Sigmoid colon (tissue), 7 donors: ENCODE measurements at regions of chr6 and their contacts with region 1.

Region 1: DNA sequence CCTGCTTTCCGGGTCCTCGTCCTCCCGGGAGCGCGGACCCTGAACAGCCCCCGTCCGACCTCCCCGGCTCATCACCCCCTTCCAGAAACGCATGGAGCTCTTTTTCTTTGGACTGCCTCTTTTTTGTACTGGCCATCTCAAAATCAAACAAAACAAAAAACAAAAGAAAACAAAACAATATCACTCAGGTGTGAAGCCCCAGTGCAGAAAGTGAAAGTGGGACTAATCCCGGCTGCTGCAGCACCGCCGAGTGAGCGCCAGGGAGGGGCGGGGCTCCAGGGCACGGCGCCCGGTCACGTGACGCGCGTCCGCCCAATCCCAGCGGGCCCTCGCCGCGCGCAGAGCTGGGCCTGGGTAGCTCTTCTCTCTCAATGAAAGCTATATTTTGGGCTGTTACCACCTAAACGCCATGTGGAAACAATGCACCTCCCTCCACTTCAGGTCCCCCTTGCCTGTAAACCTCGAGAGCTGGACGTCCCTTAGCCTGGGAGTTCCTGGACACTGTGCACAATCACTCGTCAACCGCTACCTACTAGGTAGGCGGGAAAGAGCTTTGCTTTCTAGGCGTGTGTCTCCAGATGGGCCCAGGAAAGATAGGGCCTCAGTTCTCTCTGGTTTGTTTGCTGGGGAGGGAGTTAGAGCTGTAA is 93.7 kb upstream of the PRDM1 start:
- DNase-seq: peak; percentile 84
- H3K4me3 ChIP-seq: peak overlapping the region; percentile 29 to 56 (median 46)
- H3K27ac ChIP-seq: peak overlapping the region in 2 of 4 donors; percentile 11 to 32
- H3K4me1 ChIP-seq: peaks cover 0 to 37% (median 32%) of the 10 kb centered on the region in 4 donors
- H3K27me3 ChIP-seq: peaks cover 46 to 100% (median 86%) of the 10 kb centered on the region in 3 donors
- CTCF ChIP-seq: no peak
- EP300 ChIP-seq: no peak
- POLR2A ChIP-seq: no peak

Region 2: DNA sequence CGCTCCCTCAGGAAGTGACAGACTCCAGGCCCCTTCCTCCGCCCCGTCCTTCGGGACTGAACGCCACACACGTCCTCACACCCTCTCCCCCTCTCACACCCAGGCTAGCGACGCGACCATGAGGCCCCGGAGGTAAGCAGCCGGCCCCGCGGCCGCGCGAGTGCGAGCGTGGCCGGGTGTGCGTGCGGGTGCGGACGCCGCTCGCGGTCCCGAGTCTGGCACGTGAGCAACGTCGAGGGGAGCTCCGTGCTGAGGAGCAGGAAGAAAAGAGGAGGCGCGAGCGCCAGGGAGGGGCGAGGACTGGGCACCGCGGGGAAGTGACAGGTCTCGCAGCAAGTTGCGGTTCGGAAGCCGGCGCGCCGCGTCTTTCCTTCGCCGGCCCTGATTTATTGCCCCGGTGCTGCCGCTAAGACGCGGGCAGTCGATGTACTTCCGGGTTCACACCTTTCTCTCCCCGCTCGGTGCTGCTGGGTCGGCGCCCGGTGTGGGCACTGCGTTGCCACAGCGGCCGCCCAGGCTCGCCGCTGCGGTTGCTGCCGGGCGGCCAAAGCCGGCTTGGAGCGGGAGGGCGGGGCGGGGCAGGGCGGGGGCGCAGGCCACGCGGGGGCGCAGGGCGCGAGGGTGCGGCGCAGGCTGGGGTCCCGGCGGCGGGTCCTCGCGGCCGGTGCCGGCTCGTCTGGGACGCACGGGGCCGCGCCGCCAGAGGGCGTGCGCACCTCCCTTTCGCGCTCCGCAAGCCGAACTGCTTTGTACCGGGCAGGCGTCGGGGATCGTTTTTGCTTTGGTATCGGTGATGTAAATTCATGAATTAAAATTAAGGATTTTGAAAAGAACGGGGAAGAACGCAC is 1051.3 kb before region 1 on chr6:
- intact Hi-C with region 1: loop called (anchors 5 kb)
- DNase-seq: no peak
- H3K4me3 ChIP-seq: peak overlapping the region; percentile 5 to 46 (median 24)
- H3K27ac ChIP-seq: no peak overlapping the region
- H3K4me1 ChIP-seq: peaks cover 0 to 11% (median 10%) of the 10 kb centered on the region in 4 donors
- H3K27me3 ChIP-seq: peaks cover 23 to 94% (median 62%) of the 10 kb centered on the region in 3 donors
- CTCF ChIP-seq: peak in 1 of 4 experiments; percentile 31
- EP300 ChIP-seq: no peak
- POLR2A ChIP-seq: no peak

Region 3: GRCh38 chr6:105601541-105602236 is 390.7 kb before region 1 on chr6:
- intact Hi-C with region 1: loop called (anchors 10 kb)
- DNase-seq: peak; percentile 89
- H3K4me3 ChIP-seq: no peak overlapping the region
- H3K27ac ChIP-seq: peak overlapping the region; percentile 56 to 76 (median 66)
- H3K4me1 ChIP-seq: peaks cover 0 to 47% (median 36%) of the 10 kb centered on the region in 4 donors
- H3K27me3 ChIP-seq: no peaks in the 10 kb centered on the region
- CTCF ChIP-seq: no peak
- EP300 ChIP-seq: peak in 1 of 4 donors; percentile 37
- POLR2A ChIP-seq: no peak

Region 4: DNA sequence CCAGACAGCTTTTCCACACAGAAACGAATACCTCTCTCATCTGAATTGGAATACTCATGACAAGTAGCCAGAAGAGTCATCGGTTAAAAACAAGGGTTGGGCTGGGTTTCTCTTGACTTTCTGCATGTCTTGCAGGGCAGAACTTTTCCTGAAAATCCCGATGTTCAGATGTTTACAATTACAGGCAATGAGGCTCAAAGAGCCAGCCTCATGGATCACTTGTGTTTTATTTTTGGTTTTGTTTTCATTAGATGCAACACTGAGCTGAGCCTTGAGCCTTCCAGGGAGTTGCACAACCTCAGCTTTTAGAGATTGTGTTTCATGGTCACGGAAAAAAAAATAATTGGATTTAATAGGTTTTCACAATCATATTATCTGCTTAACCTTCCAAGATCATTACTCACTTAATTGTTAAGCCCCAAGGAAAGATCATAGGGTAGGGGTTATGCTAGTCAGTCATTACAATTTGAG is 194.4 kb before region 1 on chr6:
- intact Hi-C with region 1: no loop called
- DNase-seq: peak; percentile 72
- H3K4me3 ChIP-seq: no peak overlapping the region
- H3K27ac ChIP-seq: peak overlapping the region in 2 of 4 donors; percentile 1 to 27
- H3K4me1 ChIP-seq: peaks cover 0 to 20% (median 14%) of the 10 kb centered on the region in 4 donors
- H3K27me3 ChIP-seq: no peaks in the 10 kb centered on the region
- CTCF ChIP-seq: no peak
- EP300 ChIP-seq: no peak
- POLR2A ChIP-seq: no peak

Region 5: DNA sequence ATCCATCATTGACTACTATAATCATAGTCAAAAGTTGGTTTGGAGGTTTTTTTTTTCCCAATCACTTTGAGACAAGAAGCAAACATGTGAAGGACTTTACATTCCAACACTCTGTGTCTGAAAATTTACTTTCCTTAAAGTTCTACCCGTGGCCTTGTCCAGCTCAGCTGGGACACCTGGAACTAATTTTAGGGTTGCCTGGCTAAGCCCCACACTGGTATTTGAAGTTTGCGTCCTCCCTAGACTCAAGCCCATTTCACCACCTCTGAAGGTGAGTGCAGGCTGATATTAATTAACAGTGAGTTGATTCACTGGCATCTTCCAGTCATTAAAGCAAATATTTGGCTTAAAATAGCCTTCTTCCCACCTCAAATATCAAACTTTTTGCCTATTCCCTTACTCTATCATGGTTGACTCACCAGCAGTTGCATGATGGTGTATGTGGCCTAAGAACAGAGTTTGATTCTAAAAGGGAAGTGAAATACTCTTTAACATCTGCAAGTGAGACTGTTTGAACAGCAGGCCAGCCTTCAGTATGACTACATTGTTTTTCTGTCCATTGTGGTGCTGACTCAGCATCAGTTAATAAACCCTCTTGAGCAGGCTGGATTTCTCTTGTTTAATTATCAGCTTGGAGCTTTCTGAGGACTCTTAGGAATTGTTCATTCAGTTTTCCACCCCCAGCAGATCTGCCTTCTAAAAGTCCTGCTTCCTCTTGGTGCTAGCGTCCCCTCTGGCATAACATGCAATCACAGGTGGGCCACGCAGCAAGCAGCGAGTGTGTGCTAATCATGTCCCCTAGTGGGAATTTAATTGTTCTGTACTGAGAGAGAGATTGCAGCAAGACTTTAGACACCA is 91.9 kb after region 1 on chr6:
- intact Hi-C with region 1: loop called (anchors 5 kb)
- DNase-seq: no peak
- H3K4me3 ChIP-seq: no peak overlapping the region
- H3K27ac ChIP-seq: peak overlapping the region in 2 of 4 donors; percentile 27 to 54
- H3K4me1 ChIP-seq: peaks cover 0 to 21% (median 16%) of the 10 kb centered on the region in 4 donors
- H3K27me3 ChIP-seq: peaks cover 7 to 53% (median 24%) of the 10 kb centered on the region in 3 donors
- CTCF ChIP-seq: no peak
- EP300 ChIP-seq: no peak
- POLR2A ChIP-seq: no peak